Colonic mucosa (tissue), 4 donors: ENCODE measurements at regions of chr17 and their contacts with region 1.

Region 1: DNA sequence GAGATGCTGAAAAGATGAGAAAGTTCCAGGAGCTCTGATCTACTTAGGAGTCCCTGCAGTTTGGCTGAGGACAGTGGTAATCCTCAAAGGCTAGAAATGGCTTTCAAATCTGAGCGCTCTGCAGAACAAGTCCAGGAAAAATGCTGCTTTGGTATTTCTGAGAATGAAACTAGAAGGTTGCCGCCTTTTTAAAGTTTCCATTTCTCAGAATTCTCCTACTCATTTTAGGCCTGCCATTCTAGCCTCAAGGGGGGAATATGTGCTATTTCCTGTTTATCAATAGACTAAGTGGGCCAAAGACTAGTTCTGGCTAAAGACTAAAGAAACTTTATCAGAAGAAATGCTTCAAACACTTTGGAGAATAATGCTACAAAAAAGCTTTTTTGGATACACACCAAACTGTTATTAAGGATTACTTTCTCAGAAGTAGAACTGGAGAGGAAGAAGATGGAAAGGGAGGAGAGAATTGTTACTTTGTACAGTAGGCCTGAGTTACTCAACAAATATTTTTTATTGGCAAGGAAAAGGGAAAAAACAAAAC is at the start of gene SLFN12L:
- DNase-seq: no peak
- H3K4me3 ChIP-seq: no peak within 1 kb of the TSS
- H3K27ac ChIP-seq: peak within 1 kb of the TSS; percentile 34
- H3K4me1 ChIP-seq: no peaks in the 10 kb centered on the region
- H3K27me3 ChIP-seq: no peaks in the 10 kb centered on the region
- CTCF ChIP-seq: no peak
- total RNA-seq, gene SLFN12L: 0.86 to 1.0 TPM

Region 2: GRCh38 chr17:35170968-35171771 is 366.5 kb before region 1 on chr17:
- intact Hi-C with region 1: loop called (anchors 10 kb)
- DNase-seq: no peak
- H3K4me3 ChIP-seq: no peak overlapping the region
- H3K27ac ChIP-seq: no peak overlapping the region
- H3K4me1 ChIP-seq: no peaks in the 10 kb centered on the region
- H3K27me3 ChIP-seq: no peaks in the 10 kb centered on the region
- CTCF ChIP-seq: peak; percentile 19

Region 3: GRCh38 chr17:35312790-35313711 is 224.6 kb before region 1 on chr17:
- intact Hi-C with region 1: loop called (anchors 2 kb)
- DNase-seq: peak; percentile 45
- H3K4me3 ChIP-seq: peak overlapping the region; percentile 21
- H3K27ac ChIP-seq: no peak overlapping the region
- H3K4me1 ChIP-seq: no peaks in the 10 kb centered on the region
- H3K27me3 ChIP-seq: no peaks in the 10 kb centered on the region
- CTCF ChIP-seq: peak; percentile 58